RWPE1 (cell line): ENCODE measurements at regions of chr16 and their contacts with region 1.

Region 1: GRCh38 chr16:4271176-4272066 is 1.4 kb downstream of the TFAP4 start:
- DNase-seq: peak; percentile 89
- H3K27ac ChIP-seq: peak overlapping the region; percentile 99
- CTCF ChIP-seq: 0 out of 2 replicates have a peak, but pooled peaks have one; percentile 28

Region 2: DNA sequence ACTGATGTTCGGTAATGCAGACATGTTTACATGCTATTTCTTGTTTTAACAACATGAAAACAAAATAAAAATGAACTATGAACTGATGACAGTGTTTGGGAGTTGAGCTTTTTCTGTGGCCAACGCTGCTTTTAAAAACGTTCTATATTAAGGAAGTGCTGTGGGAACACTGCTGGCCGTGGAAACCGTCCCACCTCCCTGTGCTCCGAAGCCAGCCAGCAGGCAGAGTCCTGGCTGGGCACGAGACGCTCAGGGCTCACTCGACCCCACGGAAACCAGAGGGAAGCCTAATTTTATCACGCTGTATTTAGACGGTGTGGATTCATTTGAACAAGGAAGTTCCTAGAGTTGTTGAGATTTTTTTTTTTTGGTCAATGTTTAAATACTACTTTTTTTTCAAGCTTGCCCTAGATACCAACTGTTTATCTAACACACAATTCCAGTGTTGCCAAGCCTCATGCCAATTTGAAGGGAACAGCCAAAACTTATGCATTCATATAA is 181.0 kb before region 1 on chr16:
- CTCF ChIA-PET with region 1: interaction called, 11 read pairs
- POLR2A ChIA-PET with region 1: no interaction called
- DNase-seq: no peak
- H3K27ac ChIP-seq: no peak overlapping the region
- CTCF ChIP-seq: no peak